ENCODE measurements at regions of chr10 and their contacts with region 1.

Region 1: DNA sequence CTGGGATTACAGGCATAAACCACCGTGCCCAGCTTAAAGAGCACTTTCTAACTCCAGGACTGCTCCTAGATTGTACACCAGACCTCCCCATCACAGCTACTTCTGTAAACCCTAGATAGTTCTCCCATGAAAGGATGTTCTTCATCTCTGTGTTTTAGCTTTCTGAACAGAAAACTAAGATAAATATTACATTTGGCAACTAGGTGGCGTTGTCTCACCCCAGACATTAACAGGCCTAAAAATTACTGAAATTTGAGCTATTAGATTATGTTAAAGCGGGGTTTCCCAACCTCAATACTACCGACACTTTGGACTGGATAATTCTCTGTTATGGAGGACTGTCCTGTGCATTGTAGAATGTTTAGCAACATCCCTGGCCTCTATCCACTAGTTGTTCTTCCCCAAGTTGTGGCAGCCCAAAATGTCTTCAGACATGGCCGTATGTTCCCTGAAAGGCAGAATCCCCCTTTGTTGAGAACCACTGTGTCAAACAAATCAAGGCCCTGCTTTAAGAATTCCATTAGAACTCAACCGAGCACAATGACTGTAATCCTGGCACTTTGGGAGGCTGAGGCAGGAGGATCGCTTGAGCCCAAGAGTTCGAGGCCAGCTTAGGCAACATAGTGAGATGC is 19.1 kb downstream of the ATOH7 start:
- DNase-seq: no peak
- ATAC-seq: no peak
- H3K4me3 Mint-ChIP-seq: no peak overlapping the region
- H3K27ac Mint-ChIP-seq: no peak overlapping the region
- H3K4me1 Mint-ChIP-seq: no peaks in the 10 kb centered on the region
- H3K27me3 Mint-ChIP-seq: peaks cover 16% of the 10 kb centered on the region

Region 2: GRCh38 chr10:68223535-68224165 is 10.8 kb after region 1 on chr10:
- CTCF ChIA-PET with region 1: interaction called, 12 read pairs
- POLR2A ChIA-PET with region 1: no interaction called
- DNase-seq: no peak
- ATAC-seq: no peak
- H3K4me3 Mint-ChIP-seq: no peak overlapping the region
- H3K27ac Mint-ChIP-seq: no peak overlapping the region
- H3K4me1 Mint-ChIP-seq: no peaks in the 10 kb centered on the region
- H3K27me3 Mint-ChIP-seq: peaks cover 12% of the 10 kb centered on the region

Region 3: DNA sequence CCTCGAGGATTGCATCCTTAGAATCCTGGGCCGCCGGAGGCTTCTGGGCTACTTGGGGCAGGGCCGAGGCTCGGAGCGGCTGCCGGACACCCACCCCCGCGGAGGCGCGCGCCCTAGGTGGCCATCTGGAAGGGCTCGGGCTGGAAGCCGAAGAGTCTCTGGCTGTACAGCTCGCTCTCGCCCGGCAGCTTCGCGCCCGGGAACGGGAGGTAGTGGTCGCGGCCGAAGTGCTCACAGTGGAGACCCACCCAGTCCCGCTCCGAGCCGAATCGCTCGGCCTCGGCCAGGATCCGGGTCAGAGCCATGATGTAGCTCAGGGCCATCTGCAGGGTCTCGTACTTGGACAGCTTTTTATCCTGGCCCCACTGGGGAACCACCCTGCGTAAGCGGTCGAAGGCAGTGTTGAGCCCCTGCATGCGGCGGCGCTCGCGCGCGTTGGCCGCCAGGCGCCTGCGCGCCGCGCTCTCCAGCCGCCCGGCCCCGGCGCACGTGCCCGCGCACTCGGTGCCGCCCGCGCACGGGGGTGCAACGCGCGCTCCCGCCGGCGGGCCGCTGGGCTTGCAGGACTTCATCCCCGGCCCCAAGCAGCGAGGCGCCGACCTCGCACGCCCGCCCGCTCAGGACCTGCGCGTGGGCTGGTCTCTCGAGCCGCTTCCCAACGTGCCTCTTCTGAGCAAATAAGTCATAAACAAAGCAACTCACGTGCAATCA is 18.4 kb after region 1 on chr10:
- CTCF ChIA-PET with region 1: interaction called, 12 read pairs
- POLR2A ChIA-PET with region 1: no interaction called
- DNase-seq: peak; percentile 44
- ATAC-seq: peak; percentile 91
- H3K4me3 Mint-ChIP-seq: peak overlapping the region; percentile 66
- H3K27ac Mint-ChIP-seq: no peak overlapping the region
- H3K4me1 Mint-ChIP-seq: peaks cover 10% of the 10 kb centered on the region
- H3K27me3 Mint-ChIP-seq: peaks cover 37% of the 10 kb centered on the region

Region 4: DNA sequence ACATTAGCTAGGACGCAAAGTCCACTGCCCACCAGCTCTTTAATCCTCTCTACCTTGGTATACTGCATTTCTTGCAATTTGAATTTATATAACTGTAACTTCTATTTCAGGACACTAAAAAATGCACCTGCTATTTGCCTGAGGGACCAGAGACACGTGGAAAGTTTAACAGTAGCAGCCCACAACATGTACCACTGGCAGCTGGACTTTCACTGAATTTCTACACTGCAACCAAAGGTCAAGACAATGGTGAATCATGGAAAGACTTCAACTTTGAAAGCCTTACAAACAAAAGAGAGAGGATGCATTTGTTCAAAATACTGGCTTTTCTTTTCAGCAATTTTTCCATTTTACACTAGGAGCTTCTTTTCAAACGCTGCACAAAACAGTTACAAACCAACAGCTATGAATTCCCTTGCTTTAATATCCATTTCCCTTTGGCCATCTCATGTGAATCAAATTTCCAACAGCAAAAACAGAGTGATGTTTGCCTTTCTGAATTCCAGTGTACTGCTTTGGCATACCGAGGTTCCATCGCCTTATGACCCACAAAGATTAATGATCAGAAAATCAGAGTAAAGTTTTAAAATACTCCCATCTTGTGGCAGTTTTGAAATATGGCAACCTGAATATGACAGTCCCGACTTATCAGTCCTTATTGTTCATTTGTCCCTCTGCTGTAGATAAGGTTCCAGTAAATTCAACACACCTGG is 89.1 kb after region 1 on chr10:
- CTCF ChIA-PET with region 1: interaction called, 88 read pairs
- POLR2A ChIA-PET with region 1: no interaction called
- DNase-seq: no peak
- ATAC-seq: peak; percentile 49
- H3K4me3 Mint-ChIP-seq: no peak overlapping the region
- H3K27ac Mint-ChIP-seq: no peak overlapping the region
- H3K4me1 Mint-ChIP-seq: no peaks in the 10 kb centered on the region
- H3K27me3 Mint-ChIP-seq: no peaks in the 10 kb centered on the region

Region 5: GRCh38 chr10:68331455-68332258 is 118.8 kb after region 1 on chr10 and contains the start of gene HNRNPH3:
- CTCF ChIA-PET with region 1: interaction called, 19 read pairs
- POLR2A ChIA-PET with region 1: interaction called, 3 read pairs
- DNase-seq: peak; percentile 99
- ATAC-seq: peak; percentile 88
- H3K4me3 Mint-ChIP-seq: peak within 1 kb of the TSS; percentile 98
- H3K27ac Mint-ChIP-seq: peak within 1 kb of the TSS; percentile 100
- H3K4me1 Mint-ChIP-seq: peaks cover 44% of the 10 kb centered on the region
- H3K27me3 Mint-ChIP-seq: no peaks in the 10 kb centered on the region
- total RNA-seq, gene HNRNPH3: 114 to 122 TPM

Region 6: DNA sequence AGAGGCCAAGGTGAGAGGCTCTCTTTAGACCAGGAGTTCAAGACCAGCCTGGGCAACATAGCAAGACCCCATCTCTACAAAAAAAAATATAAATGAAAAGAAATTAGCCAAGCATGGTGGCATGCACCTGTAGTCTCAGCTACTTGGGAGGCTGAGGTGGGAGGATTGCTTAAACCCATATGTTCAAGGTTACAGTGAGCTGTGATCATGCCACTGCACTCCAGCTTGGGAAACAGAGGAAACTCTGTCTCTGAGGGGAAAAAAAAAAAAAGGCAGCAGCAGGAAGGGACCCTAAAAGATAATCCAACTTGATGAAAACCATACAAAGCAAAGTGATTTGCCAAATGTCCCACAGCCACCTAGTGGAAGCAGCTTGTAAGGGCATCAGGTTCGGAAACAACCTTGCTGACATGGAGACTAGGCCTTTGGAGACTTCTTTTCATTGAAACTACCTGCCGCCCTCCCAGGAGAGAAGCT is 135.5 kb after region 1 on chr10:
- CTCF ChIA-PET with region 1: interaction called, 46 read pairs
- POLR2A ChIA-PET with region 1: interaction called, 3 read pairs
- DNase-seq: peak; percentile 65
- ATAC-seq: peak; percentile 64
- H3K4me3 Mint-ChIP-seq: no peak overlapping the region
- H3K27ac Mint-ChIP-seq: peak overlapping the region; percentile 54
- H3K4me1 Mint-ChIP-seq: peaks cover 7% of the 10 kb centered on the region
- H3K27me3 Mint-ChIP-seq: no peaks in the 10 kb centered on the region

Region 7: GRCh38 chr10:68501691-68502090 is 288.9 kb after region 1 on chr10:
- CTCF ChIA-PET with region 1: no interaction called
- POLR2A ChIA-PET with region 1: no interaction called
- DNase-seq: no peak
- ATAC-seq: no peak
- H3K4me3 Mint-ChIP-seq: no peak overlapping the region
- H3K27ac Mint-ChIP-seq: no peak overlapping the region
- H3K4me1 Mint-ChIP-seq: no peaks in the 10 kb centered on the region
- H3K27me3 Mint-ChIP-seq: no peaks in the 10 kb centered on the region